Cardiac septum (tissue), 1 donor: ENCODE measurements at regions of chr1 and their contacts with region 1.

Region 1: GRCh38 chr1:222010306-222010705 is 268.4 kb upstream of the DUSP10 start:
- DNase-seq: no peak

Region 2: DNA sequence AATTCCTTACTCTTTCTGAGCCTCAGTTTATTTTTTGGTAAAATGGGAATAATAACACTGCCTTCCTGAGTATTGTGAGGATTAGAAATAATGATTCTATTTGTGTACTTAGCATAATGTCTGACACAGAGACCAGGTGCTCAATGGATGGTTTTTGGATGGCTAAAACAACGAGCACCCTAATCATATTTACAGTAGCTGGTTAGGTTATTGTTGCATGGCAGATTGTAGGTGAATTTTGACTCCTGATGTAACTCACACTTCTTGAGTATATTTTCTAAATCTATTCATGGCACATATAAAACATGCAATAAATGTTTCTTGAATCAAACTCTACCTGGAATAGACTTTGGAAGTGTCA is 256.5 kb before region 1 on chr1:
- intact Hi-C with region 1: loop called (anchors 10 kb)
- DNase-seq: no peak

Region 3: DNA sequence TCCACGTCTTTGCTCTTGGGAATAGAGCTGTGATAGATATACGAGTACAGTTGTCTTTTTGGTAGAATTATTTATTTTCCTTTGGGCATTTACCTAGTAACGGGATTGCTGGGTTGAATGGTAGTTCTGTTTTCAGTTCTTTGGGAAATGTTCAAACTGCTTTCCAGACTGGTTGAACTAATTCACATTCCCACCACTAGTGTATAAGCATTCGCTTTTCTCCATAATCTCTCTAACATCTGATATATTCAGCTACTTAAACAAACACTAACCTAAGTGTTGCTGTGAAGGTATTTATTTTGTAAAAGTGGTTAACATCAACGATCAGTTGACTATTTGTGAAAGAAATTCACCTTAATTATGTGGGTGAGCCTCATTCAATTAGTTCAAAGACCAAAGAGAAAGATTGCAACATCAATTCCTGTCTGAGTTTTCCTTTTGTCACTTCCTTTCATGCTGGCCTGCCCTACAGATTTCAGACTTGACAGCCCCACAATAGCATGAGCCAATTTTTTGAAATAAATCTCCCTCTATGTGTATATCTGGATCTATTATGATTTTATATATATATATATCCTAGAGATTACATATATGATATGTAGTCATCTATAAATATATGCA is 241.8 kb before region 1 on chr1:
- intact Hi-C with region 1: no loop called
- DNase-seq: no peak